ENCODE measurements at regions of chr1 and their contacts with region 1.

Region 1: DNA sequence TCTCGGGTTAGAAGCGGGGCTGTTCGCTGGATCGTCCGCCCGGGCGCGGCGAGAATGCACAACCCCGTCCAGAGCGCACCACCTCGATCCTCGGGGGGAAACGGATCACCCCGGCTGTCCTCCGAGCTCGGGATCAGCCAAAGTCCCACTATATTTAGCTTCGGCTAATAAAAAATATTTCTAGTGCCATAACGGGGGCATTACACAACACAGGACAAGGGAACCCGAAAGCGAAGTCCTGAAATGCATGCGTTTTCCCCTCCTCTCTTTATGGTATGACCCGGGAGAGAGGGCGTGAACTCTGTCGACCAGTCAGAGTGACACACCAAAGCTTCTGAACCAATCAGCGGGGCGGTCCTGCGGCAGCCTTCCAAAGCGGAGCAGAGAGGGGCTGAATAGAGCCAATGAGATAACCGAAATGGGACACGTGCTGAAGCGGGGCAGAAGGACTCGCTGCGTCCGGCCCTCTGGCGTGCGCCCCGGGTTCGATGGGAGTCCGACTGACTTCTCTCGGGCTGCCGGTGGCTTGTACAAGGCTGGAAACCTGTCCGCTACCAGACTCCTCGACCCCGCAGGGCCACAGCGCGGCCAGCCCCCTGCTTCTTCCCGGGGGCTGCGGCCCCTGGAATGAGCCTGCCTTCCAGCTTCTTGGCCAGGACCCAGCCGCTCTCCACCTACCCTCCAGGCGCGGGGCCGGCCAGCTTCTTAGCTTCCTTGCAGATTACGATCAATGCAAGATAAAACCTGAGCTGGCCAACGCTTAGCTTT is at the start of gene ALDH4A1:
- DNase-seq: peak; percentile 96 to 99
- ATAC-seq: peak; percentile 91 to 97
- H3K4me3 ChIP-seq: peak within 1 kb of the TSS; percentile 97
- H3K27ac ChIP-seq: peak within 1 kb of the TSS; percentile 86 to 91
- H3K4me1 ChIP-seq: peaks cover 35% of the 10 kb centered on the region
- CTCF ChIP-seq: no peak
- EP300 ChIP-seq: no peak
- POLR2A ChIP-seq: peak; percentile 31
- RAD21 ChIP-seq: no peak
- polyA plus RNA-seq, gene ALDH4A1: 9.4 and 9.7 TPM in 2 replicates

Region 2: DNA sequence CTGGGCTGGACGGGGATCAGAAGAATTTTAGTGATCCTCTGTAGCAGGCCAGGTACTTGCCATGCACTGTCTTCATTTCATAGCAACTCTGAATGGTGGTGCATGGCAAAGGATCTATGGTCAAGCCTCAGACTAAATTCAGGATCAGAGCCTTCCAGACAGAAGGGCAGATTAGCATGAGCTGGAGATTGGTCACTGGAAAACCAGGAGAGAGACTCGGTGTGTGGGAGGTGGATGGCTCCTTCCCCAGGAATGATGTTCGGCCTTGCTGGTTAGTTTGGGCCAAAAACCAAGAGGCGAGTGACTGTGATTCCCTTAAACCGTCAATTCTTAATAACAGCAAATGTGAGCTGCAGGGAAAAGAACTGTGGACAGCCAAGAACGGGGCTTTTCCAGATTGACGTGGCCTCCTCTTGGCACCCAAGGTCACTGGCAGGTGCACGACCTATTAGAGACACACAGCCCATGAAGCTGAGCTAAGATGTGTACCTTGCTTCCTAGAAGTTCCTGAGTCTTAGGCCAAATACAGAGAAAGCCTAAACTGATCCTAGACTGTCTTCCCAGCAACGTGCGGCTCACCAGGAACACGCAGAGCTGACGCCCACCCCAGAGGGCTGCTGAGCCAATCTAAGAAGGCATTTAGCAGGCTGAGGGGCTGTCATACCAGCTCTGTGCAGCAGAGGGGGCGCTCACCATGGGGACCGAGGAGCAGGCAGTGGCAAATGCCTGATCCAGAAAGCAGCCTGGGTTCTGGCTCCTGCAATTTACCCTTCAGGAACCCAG is 18.9 kb before region 1 on chr1:
- CTCF ChIA-PET with region 1: interaction called, 24 read pairs
- POLR2A ChIA-PET with region 1: no interaction called
- DNase-seq: peak; percentile 50 to 61
- ATAC-seq: peak; percentile 73 to 90
- H3K4me3 ChIP-seq: no peak overlapping the region
- H3K27ac ChIP-seq: no peak overlapping the region; a peak in 1 of 6 replicates
- H3K4me1 ChIP-seq: peaks cover 9% of the 10 kb centered on the region; the same call in 2 of the 3 replicates
- CTCF ChIP-seq: peak; percentile 63
- EP300 ChIP-seq: no peak
- POLR2A ChIP-seq: no peak
- RAD21 ChIP-seq: peak; percentile 77 to 81

Region 3: GRCh38 chr1:18926315-18927081 is 23.8 kb after region 1 on chr1:
- CTCF ChIA-PET with region 1: interaction called, 14 read pairs
- POLR2A ChIA-PET with region 1: no interaction called
- DNase-seq: peak; percentile 73 to 84
- ATAC-seq: peak; percentile 63 to 67; a peak in 5 of 6 replicates
- H3K4me3 ChIP-seq: no peak overlapping the region
- H3K27ac ChIP-seq: peak overlapping the region; percentile 78 to 94
- H3K4me1 ChIP-seq: peaks cover 83% of the 10 kb centered on the region
- CTCF ChIP-seq: no peak
- EP300 ChIP-seq: no peak
- POLR2A ChIP-seq: no peak
- RAD21 ChIP-seq: no peak

Region 4: GRCh38 chr1:18941221-18942141 is 38.8 kb after region 1 on chr1:
- CTCF ChIA-PET with region 1: interaction called, 13 read pairs
- POLR2A ChIA-PET with region 1: no interaction called
- DNase-seq: peak in 1 of 2 experiments; percentile 66
- ATAC-seq: no peak; a peak in 1 of 6 replicates
- H3K4me3 ChIP-seq: no peak overlapping the region
- H3K27ac ChIP-seq: peak overlapping the region; percentile 37 to 68; a peak in 5 of 6 replicates
- H3K4me1 ChIP-seq: peaks cover 83% of the 10 kb centered on the region
- CTCF ChIP-seq: no peak
- EP300 ChIP-seq: no peak
- POLR2A ChIP-seq: no peak
- RAD21 ChIP-seq: no peak

Region 5: GRCh38 chr1:19074902-19075721 is 172.4 kb after region 1 on chr1:
- CTCF ChIA-PET with region 1: interaction called, 17 read pairs
- POLR2A ChIA-PET with region 1: no interaction called
- DNase-seq: no peak
- ATAC-seq: no peak
- H3K4me3 ChIP-seq: no peak overlapping the region
- H3K27ac ChIP-seq: peak overlapping the region in 1 of 2 experiments; percentile 45; a peak in 1 of 6 replicates
- H3K4me1 ChIP-seq: peaks cover 18% of the 10 kb centered on the region
- CTCF ChIP-seq: no peak
- EP300 ChIP-seq: no peak
- POLR2A ChIP-seq: no peak
- RAD21 ChIP-seq: no peak

Region 6: GRCh38 chr1:19081218-19081893 is 178.6 kb after region 1 on chr1:
- CTCF ChIA-PET with region 1: interaction called, 319 read pairs
- POLR2A ChIA-PET with region 1: no interaction called
- DNase-seq: peak; percentile 25 to 69
- ATAC-seq: peak; percentile 54 to 68; a peak in 4 of 6 replicates
- H3K4me3 ChIP-seq: peak overlapping the region; percentile 38
- H3K27ac ChIP-seq: peak overlapping the region; percentile 88 to 95
- H3K4me1 ChIP-seq: peaks cover 46% of the 10 kb centered on the region
- CTCF ChIP-seq: no peak
- EP300 ChIP-seq: no peak
- POLR2A ChIP-seq: no peak
- RAD21 ChIP-seq: no peak

Region 7: GRCh38 chr1:19113697-19114092 is 211.0 kb after region 1 on chr1:
- CTCF ChIA-PET with region 1: interaction called, 14 read pairs
- POLR2A ChIA-PET with region 1: no interaction called
- DNase-seq: peak; percentile 58 to 59
- ATAC-seq: peak; percentile 87 to 92
- H3K4me3 ChIP-seq: no peak overlapping the region
- H3K27ac ChIP-seq: no peak overlapping the region
- H3K4me1 ChIP-seq: no peaks in the 10 kb centered on the region
- CTCF ChIP-seq: peak; percentile 51
- EP300 ChIP-seq: no peak
- POLR2A ChIP-seq: no peak
- RAD21 ChIP-seq: peak; percentile 44 to 54; a peak in 4 of 5 replicates

Measured in A549 (cell line).